Endothelial cell of umbilical vein (primary cell): ENCODE measurements at regions of chr20 and their contacts with region 1.

Region 1: GRCh38 chr20:41003143-41003883 is 25.3 kb upstream of the TOP1 start:
- DNase-seq: peak; percentile 96
- H3K4me3 ChIP-seq: peak overlapping the region in 1 of 3 experiments; percentile 9
- H3K27ac ChIP-seq: peak overlapping the region; percentile 95
- H3K4me1 ChIP-seq: peaks cover 60% of the 10 kb centered on the region
- H3K27me3 ChIP-seq: no peaks in the 10 kb centered on the region
- CTCF ChIP-seq: no peak
- POLR2A ChIP-seq: no peak

Region 2: DNA sequence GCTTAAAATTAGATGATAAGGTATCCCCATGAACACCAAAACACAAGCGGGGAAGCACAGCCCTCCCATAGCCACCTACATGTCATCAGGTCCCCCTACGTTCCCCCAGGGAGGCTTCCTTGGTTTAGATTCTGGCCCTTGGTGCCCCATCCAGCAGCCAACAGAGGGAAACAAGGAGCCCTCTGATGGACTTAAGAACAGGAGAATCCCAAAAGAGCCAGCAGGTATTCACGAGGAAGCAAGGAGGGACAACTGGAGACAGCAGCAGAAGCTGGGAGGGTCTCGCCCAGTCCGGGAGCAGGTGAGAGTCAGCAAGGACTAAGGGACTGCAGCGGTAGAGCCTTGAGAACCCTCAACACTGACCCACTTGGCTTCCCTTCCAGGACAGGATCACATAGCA is 33.1 kb before region 1 on chr20:
- CTCF ChIA-PET with region 1: no interaction called
- POLR2A ChIA-PET with region 1: no interaction called
- dilution Hi-C with region 1: no loop called
- intact Hi-C with region 1: loop called (anchors 1 kb)
- DNase-seq: no peak
- H3K4me3 ChIP-seq: no peak overlapping the region
- H3K27ac ChIP-seq: no peak overlapping the region
- H3K4me1 ChIP-seq: no peaks in the 10 kb centered on the region
- H3K27me3 ChIP-seq: no peaks in the 10 kb centered on the region
- CTCF ChIP-seq: peak in 1 of 2 donors; percentile 16
- POLR2A ChIP-seq: no peak

Region 3: GRCh38 chr20:41057999-41058896 is 54.9 kb after region 1 on chr20:
- CTCF ChIA-PET with region 1: interaction called, 5 read pairs
- POLR2A ChIA-PET with region 1: no interaction called
- dilution Hi-C with region 1: no loop called
- intact Hi-C with region 1: loop called (anchors 1 kb)
- DNase-seq: peak; percentile 71
- H3K4me3 ChIP-seq: no peak overlapping the region
- H3K27ac ChIP-seq: peak overlapping the region; percentile 30
- H3K4me1 ChIP-seq: peaks cover 30% of the 10 kb centered on the region
- H3K27me3 ChIP-seq: no peaks in the 10 kb centered on the region
- CTCF ChIP-seq: no peak
- POLR2A ChIP-seq: no peak

Region 4: GRCh38 chr20:41078329-41078728 is 75.0 kb after region 1 on chr20:
- CTCF ChIA-PET with region 1: interaction called, 4 read pairs
- POLR2A ChIA-PET with region 1: no interaction called
- dilution Hi-C with region 1: no loop called
- intact Hi-C with region 1: loop called (anchors 1 kb)
- DNase-seq: peak; percentile 86
- H3K4me3 ChIP-seq: no peak overlapping the region
- H3K27ac ChIP-seq: no peak overlapping the region
- H3K4me1 ChIP-seq: peaks cover 64% of the 10 kb centered on the region
- H3K27me3 ChIP-seq: no peaks in the 10 kb centered on the region
- CTCF ChIP-seq: peak; percentile 49 to 52
- POLR2A ChIP-seq: peak; percentile 52

Region 5: DNA sequence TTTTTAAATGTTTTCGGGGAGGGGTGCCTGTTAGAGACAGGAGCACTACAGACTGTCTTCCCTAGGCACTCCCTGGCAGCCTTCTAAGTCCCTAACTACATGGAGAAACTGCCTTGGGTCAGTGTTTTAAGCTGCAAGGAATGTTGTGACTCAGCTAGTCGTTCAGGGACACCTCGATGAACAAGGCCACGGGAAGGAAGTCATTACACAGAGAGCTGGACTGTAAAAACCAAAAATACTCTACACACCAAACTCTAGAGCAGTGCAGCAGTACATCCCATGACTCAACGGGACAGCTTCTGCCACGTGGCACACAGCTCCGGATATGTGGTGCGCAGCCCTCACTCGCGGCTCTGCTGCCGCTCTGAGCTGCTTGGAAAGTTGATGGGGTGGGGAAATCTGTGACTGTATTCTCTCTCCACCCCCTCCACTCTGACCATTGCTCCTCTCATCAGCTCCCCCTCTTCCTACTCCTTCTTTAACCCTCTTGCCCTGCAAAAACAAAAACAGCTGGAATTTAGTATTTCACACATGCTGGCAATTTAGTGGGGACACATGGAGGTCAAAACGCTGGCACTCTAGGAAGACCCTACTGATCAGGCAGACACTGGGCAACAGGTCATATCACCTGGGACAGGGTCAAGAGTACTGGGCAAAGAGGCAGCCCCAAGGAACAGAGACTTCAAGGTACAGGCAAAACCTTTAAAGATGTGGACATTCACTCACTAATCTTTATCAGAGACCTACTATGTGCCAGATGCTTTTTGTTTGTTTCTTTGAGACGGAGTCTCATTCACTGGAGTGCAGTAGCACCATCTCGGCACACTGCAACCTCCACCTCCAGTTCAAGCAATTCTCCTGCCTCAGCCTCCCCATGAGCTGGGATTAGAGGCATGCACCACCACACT is 326.4 kb after region 1 on chr20:
- CTCF ChIA-PET with region 1: no interaction called
- POLR2A ChIA-PET with region 1: no interaction called
- dilution Hi-C with region 1: no loop called
- intact Hi-C with region 1: loop called (anchors 10 kb)
- DNase-seq: peak; percentile 94
- H3K4me3 ChIP-seq: no peak overlapping the region
- H3K27ac ChIP-seq: peak overlapping the region; percentile 89
- H3K4me1 ChIP-seq: peaks cover 20% of the 10 kb centered on the region
- H3K27me3 ChIP-seq: no peaks in the 10 kb centered on the region
- CTCF ChIP-seq: no peak
- POLR2A ChIP-seq: peak; percentile 66